ENCODE measurements at regions of chr1 and their contacts with region 1.

Region 1: GRCh38 chr1:40862008-40862863 is at the start of gene CITED4:
- DNase-seq: peak; percentile 87 to 99
- H3K4me3 ChIP-seq: peak within 1 kb of the TSS; percentile 89
- H3K27ac ChIP-seq: peak within 1 kb of the TSS; percentile 52
- H3K4me1 ChIP-seq: peaks cover 60% of the 10 kb centered on the region
- H3K27me3 ChIP-seq: no peaks in the 10 kb centered on the region
- CTCF ChIP-seq: peak; percentile 49
- total RNA-seq, gene CITED4: 67.5 and 98.2 TPM in 2 replicates

Region 2: DNA sequence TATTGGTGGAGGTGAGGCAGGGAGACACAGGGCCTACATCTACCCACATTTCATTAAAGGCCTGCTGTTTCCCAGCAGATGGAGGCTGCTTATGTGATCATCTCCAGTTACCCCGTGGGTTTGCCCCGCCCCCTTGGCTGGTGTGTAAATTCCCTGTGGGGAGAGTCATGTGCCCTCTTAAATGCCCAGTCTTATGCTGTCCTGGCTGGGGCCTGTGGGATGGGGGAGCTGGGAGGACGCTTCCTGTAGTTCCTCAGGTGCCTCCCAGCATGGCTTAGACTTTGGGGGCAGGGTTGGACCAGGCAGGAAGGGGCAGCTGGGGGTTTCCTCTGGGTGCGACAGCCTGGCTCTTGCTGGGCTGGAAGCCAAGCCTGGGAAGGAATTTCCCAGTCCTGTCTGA is 15.5 kb after region 1 on chr1:
- CTCF ChIA-PET with region 1: interaction called, 6 read pairs
- POLR2A ChIA-PET with region 1: interaction called, 6 read pairs
- intact Hi-C with region 1: loop called (anchors 1 kb)
- DNase-seq: peak; percentile 65 to 82
- H3K4me3 ChIP-seq: no peak overlapping the region
- H3K27ac ChIP-seq: peak overlapping the region; percentile 65
- H3K4me1 ChIP-seq: peaks cover 55% of the 10 kb centered on the region
- H3K27me3 ChIP-seq: no peaks in the 10 kb centered on the region
- CTCF ChIP-seq: no peak

Region 3: DNA sequence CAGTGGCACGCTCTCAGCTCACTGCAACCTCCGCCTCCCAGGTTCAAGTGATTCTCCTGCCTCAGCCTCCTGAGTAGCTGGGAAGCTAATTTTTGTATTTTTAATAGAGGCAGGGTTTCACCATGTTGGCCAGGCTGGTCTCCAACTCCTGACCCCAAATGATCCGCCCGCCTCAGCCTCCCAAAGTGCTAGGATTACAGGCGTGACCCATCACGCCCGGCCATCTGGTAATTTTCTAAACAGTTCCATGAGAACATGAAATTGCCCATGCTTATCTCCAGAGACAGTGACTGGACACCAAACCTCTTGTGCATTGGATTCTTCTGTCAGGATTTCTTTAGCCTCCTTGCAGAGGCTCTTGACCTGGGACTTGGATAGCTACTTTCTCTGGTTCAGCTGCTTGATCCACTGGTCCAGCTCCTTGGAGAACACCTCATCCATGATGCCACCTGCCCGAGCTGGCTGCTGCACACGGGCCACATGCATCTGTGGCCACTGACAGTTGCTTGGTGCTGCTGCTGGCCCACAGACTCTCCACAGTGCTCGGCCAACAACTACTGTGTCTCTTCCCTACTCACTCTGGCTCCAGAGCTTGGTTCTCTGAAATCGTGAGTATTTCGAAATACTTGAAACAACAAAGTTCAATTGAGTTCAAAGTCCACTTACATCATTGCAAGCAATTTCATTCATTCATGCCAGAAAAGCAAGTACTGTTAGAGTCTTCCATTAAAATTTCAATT is 77.3 kb after region 1 on chr1:
- CTCF ChIA-PET with region 1: no interaction called
- POLR2A ChIA-PET with region 1: interaction called, 19 read pairs
- intact Hi-C with region 1: no loop called
- DNase-seq: no peak
- H3K4me3 ChIP-seq: no peak overlapping the region
- H3K27ac ChIP-seq: no peak overlapping the region
- H3K4me1 ChIP-seq: peaks cover 13% of the 10 kb centered on the region
- H3K27me3 ChIP-seq: no peaks in the 10 kb centered on the region
- CTCF ChIP-seq: no peak

Region 4: DNA sequence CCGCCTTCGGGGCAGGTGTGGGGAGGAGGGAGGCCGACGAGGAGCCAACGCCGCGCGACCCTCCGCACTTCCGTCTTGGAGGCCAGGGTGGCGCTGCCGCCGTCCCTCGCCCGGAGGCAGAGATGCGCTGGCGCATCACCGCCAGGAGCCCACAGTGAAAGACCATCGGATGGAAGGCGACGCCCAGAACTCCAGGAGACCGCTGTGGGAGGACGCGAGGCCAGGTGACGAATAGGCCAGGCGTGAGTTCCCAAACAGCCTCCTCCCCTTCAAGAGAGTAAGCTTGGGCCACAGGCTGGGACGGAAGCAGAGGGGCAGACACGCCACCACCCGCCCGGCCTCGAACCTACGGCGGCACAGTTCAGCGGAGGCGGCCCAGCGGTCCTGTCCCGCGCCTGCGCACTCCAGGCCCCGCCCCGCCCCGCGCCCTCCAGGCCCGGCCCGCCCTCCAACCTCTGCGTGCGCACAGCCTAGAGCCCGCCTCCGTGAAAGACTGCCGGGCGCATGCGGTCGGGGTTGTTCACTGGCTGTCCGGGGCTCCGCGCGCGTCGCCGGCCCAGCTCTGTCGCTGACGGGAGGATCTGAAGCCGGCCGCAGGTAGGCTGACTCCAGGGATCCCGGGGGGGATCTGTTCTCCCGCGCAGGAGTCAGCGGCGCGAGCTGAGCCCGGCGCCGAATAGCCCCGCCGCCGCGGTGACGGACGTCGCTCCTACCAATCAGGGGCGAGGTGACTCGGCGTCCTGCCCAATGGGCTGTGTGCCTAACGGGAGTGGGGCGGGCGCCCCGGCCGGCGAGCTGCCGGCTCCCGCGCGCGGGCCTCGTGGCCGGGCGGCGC is 117.2 kb after region 1 on chr1 and contains the start of gene CTPS1:
- CTCF ChIA-PET with region 1: interaction called, 3 read pairs
- POLR2A ChIA-PET with region 1: interaction called, 8 read pairs
- intact Hi-C with region 1: loop called (anchors 1 kb)
- DNase-seq: peak; percentile 82 to 97
- H3K4me3 ChIP-seq: peak within 1 kb of the TSS; percentile 92
- H3K27ac ChIP-seq: peak within 1 kb of the TSS; percentile 84
- H3K4me1 ChIP-seq: peaks cover 22% of the 10 kb centered on the region
- H3K27me3 ChIP-seq: no peaks in the 10 kb centered on the region
- CTCF ChIP-seq: no peak
- total RNA-seq, gene CTPS1: 80.5 and 91.9 TPM in 2 replicates

Region 5: GRCh38 chr1:41009466-41009865 is 147.2 kb after region 1 on chr1:
- CTCF ChIA-PET with region 1: no interaction called
- POLR2A ChIA-PET with region 1: no interaction called
- intact Hi-C with region 1: no loop called
- DNase-seq: no peak
- H3K4me3 ChIP-seq: no peak overlapping the region
- H3K27ac ChIP-seq: no peak overlapping the region
- H3K4me1 ChIP-seq: no peaks in the 10 kb centered on the region
- H3K27me3 ChIP-seq: no peaks in the 10 kb centered on the region
- CTCF ChIP-seq: no peak

Region 6: GRCh38 chr1:41496080-41497055 is 634.1 kb after region 1 on chr1:
- CTCF ChIA-PET with region 1: no interaction called
- POLR2A ChIA-PET with region 1: no interaction called
- intact Hi-C with region 1: loop called (anchors 10 kb)
- DNase-seq: peak; percentile 82 to 94
- H3K4me3 ChIP-seq: peak overlapping the region; percentile 49; the same call in 1 of the 2 replicates
- H3K27ac ChIP-seq: peak overlapping the region; percentile 67
- H3K4me1 ChIP-seq: peaks cover 79% of the 10 kb centered on the region
- H3K27me3 ChIP-seq: no peaks in the 10 kb centered on the region
- CTCF ChIP-seq: no peak

Region 7: DNA sequence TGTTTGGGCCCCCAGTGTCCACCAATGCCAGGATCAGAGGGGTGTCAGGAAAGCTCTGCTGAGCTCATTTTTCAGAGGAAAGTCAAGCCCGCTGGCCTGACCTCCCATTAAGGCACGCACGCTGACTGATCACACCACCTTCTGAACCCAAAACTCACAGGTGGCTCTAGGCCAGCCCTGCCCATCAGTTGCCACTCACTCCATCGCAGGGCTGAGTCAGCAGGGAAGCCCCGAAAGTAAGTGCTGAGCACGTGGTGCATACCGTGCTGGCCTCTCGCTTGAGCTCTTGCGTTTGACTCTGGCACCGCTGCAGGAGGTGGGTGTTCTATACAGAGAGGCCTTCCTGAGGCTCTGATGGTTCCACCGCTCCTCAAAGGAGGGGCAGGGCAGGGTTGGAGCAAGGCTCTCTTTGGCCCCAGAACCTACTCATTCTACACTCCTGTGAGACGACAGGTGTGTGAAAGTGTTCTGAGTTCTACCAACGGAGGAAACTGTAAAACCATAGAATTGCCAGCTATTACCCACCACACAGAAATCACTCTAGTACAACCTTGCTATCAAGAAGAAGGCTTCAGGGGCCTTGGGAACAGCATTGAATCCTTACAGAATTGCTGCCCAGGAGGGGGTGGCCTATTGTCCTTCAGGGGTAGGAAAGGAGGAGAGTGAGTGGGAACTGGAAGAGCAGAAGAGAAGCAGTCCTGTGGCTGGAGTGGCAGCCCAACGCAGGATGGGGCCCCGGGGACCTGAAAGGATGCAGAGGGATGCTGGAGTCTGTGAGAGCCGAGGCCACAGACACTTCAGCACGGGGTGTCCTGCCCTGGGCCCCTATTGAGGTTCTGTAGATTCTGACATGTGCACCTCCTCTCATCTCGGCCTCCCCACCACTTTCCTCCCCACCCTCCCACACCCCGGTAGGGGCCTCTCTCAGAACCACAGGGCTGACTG is 837.0 kb after region 1 on chr1:
- CTCF ChIA-PET with region 1: no interaction called
- POLR2A ChIA-PET with region 1: no interaction called
- intact Hi-C with region 1: no loop called
- DNase-seq: no peak
- H3K4me3 ChIP-seq: no peak overlapping the region
- H3K27ac ChIP-seq: no peak overlapping the region
- H3K4me1 ChIP-seq: no peaks in the 10 kb centered on the region
- H3K27me3 ChIP-seq: no peaks in the 10 kb centered on the region
- CTCF ChIP-seq: no peak